ENCODE measurements at regions of chr15 and their contacts with region 1.

Region 1: DNA sequence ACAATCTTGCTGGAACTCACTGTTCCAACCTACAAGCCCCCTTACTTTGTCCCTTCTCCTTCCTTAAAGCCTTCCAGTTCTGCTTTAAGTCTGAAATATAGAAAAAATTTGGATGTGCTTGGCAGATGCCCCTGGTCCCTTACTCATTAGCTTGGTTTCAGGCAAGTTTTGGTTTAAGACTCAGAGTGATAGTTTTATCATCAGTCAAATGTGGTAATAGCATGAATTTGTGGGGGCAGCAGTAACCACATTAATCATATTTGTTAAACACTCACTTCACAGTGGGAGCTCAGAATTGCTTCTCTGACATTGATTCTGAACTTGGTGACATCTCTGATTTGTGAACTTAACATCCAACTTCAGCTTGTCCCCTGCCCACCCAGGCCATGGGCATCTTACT is 58.3 kb upstream of the ALDH1A3 start:
- DNase-seq: no peak
- ATAC-seq: no peak
- H3K4me3 ChIP-seq: no peak overlapping the region
- H3K27ac ChIP-seq: no peak overlapping the region
- H3K4me1 ChIP-seq: no peaks in the 10 kb centered on the region
- H3K27me3 ChIP-seq: peaks cover 0 to 5% (median 0%) of the 10 kb centered on the region in 3 donors
- CTCF ChIP-seq: no peak

Region 2: GRCh38 chr15:100663086-100663914 is 158.0 kb before region 1 on chr15:
- intact Hi-C with region 1: no loop called
- DNase-seq: no peak
- ATAC-seq: peak in 2 of 4 donors; percentile 22 to 25
- H3K4me3 ChIP-seq: no peak overlapping the region
- H3K27ac ChIP-seq: no peak overlapping the region
- H3K4me1 ChIP-seq: no peaks in the 10 kb centered on the region
- H3K27me3 ChIP-seq: peaks cover 0 to 16% (median 5%) of the 10 kb centered on the region in 3 donors
- CTCF ChIP-seq: no peak

Region 3: DNA sequence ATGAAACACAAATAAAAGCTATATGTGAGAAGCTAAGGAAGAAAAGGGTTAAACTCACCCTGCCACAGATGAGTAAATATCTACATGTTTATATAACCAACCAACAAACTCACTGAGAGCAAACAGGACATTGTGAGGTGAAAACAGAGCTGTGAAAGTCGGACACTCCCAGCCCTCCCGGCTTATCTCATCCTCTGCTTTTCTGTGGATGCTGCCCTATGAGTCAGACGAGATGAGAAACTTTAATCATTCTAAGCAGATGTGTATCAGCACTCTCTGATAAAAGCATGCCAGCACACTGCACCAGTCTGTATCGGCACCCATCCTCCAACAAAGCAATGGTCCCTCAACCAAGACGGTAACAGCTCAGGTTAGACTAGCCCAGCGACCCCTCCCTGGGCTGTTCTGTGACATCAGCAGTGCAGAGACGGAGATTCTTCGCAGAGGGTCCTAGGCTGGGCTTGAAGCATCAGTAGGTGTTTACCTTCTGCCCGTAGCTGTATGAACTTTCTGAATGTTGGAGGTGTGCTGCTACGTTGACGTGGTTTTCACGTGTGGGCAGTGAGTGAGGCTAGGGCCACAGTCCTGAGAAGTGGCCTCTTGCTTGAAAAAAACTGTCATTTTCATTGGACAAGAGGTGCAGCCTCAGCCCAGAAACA is 61.5 kb before region 1 on chr15:
- intact Hi-C with region 1: loop called in 1 of 2 experiments (anchors 10 kb)
- DNase-seq: peak in 1 of 2 donors; percentile 26
- ATAC-seq: no peak
- H3K4me3 ChIP-seq: no peak overlapping the region
- H3K27ac ChIP-seq: no peak overlapping the region
- H3K4me1 ChIP-seq: no peaks in the 10 kb centered on the region
- H3K27me3 ChIP-seq: peaks cover 0 to 7% (median 0%) of the 10 kb centered on the region in 3 donors
- CTCF ChIP-seq: no peak

Region 4: GRCh38 chr15:100778831-100779288 is 42.5 kb before region 1 on chr15:
- intact Hi-C with region 1: no loop called
- DNase-seq: no peak
- ATAC-seq: no peak
- H3K4me3 ChIP-seq: no peak overlapping the region
- H3K27ac ChIP-seq: no peak overlapping the region
- H3K4me1 ChIP-seq: no peaks in the 10 kb centered on the region
- H3K27me3 ChIP-seq: peaks cover 0 to 7% (median 1%) of the 10 kb centered on the region in 3 donors
- CTCF ChIP-seq: no peak

Region 5: GRCh38 chr15:100934726-100935125 is 113.4 kb after region 1 on chr15:
- intact Hi-C with region 1: no loop called
- DNase-seq: no peak
- ATAC-seq: no peak
- H3K4me3 ChIP-seq: no peak overlapping the region
- H3K27ac ChIP-seq: no peak overlapping the region
- H3K4me1 ChIP-seq: no peaks in the 10 kb centered on the region
- H3K27me3 ChIP-seq: no peaks in the 10 kb centered on the region
- CTCF ChIP-seq: no peak